CD4-positive, alpha-beta memory T cell (primary cell): ENCODE measurements at regions of chr5 and their contacts with region 1.

Region 1: GRCh38 chr5:99045871-99046270 is 117.1 kb upstream of the CHD1 start:
- DNase-seq: no peak
- H3K4me3 ChIP-seq: no peak overlapping the region
- H3K4me3 Mint-ChIP-seq: peak overlapping the region in 2 of 8 donors; percentile 25 to 46
- H3K27ac ChIP-seq: no peak overlapping the region
- H3K27ac Mint-ChIP-seq: peak overlapping the region in 3 of 7 donors; percentile 22 to 73 (median 51)
- H3K4me1 ChIP-seq: peaks cover 14% of the 10 kb centered on the region
- H3K4me1 Mint-ChIP-seq: peaks cover 4 to 23% (median 12%) of the 10 kb centered on the region in 4 donors
- H3K27me3 ChIP-seq: no peaks in the 10 kb centered on the region
- H3K27me3 Mint-ChIP-seq: no peaks in the 10 kb centered on the region

Region 2: DNA sequence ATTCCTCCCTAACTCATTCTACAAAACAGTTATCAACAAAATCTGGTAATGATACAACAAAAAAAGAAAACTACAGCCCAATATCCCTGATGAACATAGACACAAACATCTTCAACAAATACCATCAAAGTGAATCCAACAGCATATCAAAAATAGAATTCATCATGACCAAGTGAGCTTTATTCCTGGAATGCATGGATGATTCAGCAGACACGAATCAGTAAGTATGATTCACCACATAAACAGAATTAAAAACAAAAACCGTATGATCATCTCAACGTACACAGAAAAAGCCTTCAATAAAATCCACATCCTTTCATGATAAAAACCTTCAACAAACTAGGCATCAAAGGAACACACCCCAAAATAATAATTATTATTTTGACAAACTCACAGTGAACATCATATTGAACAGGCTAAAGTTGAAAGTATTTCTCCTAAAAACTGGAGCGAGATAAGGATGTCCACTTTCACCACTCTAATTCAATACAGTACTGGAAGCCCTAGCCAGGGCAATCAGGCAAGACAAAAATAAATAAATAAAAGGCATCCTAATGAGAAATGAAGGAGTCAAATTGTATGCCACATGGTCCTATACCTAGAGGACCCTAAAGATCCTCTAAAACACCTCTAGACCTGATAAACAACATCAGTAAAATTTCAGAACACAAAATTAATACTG is 577.5 kb before region 1 on chr5:
- CTCF ChIA-PET with region 1: no interaction called
- POLR2A ChIA-PET with region 1: no interaction called
- intact Hi-C with region 1: no loop called
- DNase-seq: no peak
- H3K4me3 ChIP-seq: no peak overlapping the region
- H3K4me3 Mint-ChIP-seq: no peak overlapping the region
- H3K27ac ChIP-seq: no peak overlapping the region
- H3K27ac Mint-ChIP-seq: no peak overlapping the region
- H3K4me1 ChIP-seq: no peaks in the 10 kb centered on the region
- H3K4me1 Mint-ChIP-seq: no peaks in the 10 kb centered on the region
- H3K27me3 ChIP-seq: no peaks in the 10 kb centered on the region
- H3K27me3 Mint-ChIP-seq: no peaks in the 10 kb centered on the region

Region 3: DNA sequence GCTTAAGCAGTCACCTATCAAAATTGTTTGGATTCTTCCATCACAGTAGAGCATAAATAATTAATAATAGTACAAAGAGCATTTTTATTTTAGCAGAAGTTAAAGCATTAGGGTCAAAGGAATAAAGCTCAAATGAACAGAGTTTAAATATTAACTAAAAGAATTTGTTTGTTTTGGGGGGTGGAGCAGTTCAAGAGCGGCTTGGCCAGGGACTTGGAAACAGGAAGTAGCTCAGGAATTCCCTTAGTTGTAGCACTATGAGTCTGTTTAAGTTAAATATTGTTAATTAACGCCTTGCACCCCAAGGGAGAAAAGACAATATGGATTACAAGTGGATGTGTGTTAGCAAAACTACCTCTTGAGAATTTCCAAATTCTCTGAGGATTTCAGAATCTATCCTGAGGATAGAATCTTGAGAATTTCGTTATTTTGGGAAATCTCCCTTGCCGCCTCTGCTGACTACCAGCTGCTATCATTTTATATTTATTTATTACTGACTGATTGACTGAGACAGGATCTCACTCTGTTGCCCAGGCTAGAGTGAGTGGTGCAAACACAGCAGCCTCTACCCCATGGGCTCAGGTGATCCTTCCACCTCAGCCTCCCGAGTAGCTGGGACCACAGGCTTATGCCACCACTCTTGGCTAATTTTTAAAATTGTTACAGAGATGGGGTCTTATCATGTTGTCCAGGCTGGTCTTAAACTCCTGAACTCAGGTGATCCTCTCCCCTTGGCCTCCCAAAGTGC is 20.4 kb before region 1 on chr5:
- CTCF ChIA-PET with region 1: interaction called, 3 read pairs
- POLR2A ChIA-PET with region 1: interaction called, 13 read pairs
- intact Hi-C with region 1: no loop called
- DNase-seq: no peak
- H3K4me3 ChIP-seq: no peak overlapping the region
- H3K4me3 Mint-ChIP-seq: no peak overlapping the region
- H3K27ac ChIP-seq: no peak overlapping the region
- H3K27ac Mint-ChIP-seq: no peak overlapping the region
- H3K4me1 ChIP-seq: peaks cover 17% of the 10 kb centered on the region
- H3K4me1 Mint-ChIP-seq: peaks cover 21 to 38% (median 27%) of the 10 kb centered on the region in 4 donors
- H3K27me3 ChIP-seq: no peaks in the 10 kb centered on the region
- H3K27me3 Mint-ChIP-seq: no peaks in the 10 kb centered on the region

Region 4: GRCh38 chr5:99141534-99142128 is 95.8 kb after region 1 on chr5:
- CTCF ChIA-PET with region 1: no interaction called
- POLR2A ChIA-PET with region 1: no interaction called
- intact Hi-C with region 1: no loop called
- DNase-seq: no peak
- H3K4me3 ChIP-seq: no peak overlapping the region
- H3K4me3 Mint-ChIP-seq: no peak overlapping the region
- H3K27ac ChIP-seq: no peak overlapping the region
- H3K27ac Mint-ChIP-seq: no peak overlapping the region
- H3K4me1 ChIP-seq: no peaks in the 10 kb centered on the region
- H3K4me1 Mint-ChIP-seq: no peaks in the 10 kb centered on the region
- H3K27me3 ChIP-seq: no peaks in the 10 kb centered on the region
- H3K27me3 Mint-ChIP-seq: peaks cover 5 to 8% of the 10 kb centered on the region in 2 donors